Activated CD4-positive, alpha-beta memory T cell treated with anti-CD3 and anti-CD28 coated beads for 36 hours (primary cell): ENCODE measurements at regions of chr9 and their contacts with region 1.

Region 1: GRCh38 chr9:129737479-129738274 is 15.2 kb downstream of the PTGES start:
- DNase-seq: peak; percentile 91
- H3K4me3 Mint-ChIP-seq: peak overlapping the region; percentile 63
- H3K27ac Mint-ChIP-seq: no peak overlapping the region
- H3K4me1 Mint-ChIP-seq: peaks cover 8% of the 10 kb centered on the region
- H3K27me3 Mint-ChIP-seq: peaks cover 2% of the 10 kb centered on the region

Region 2: DNA sequence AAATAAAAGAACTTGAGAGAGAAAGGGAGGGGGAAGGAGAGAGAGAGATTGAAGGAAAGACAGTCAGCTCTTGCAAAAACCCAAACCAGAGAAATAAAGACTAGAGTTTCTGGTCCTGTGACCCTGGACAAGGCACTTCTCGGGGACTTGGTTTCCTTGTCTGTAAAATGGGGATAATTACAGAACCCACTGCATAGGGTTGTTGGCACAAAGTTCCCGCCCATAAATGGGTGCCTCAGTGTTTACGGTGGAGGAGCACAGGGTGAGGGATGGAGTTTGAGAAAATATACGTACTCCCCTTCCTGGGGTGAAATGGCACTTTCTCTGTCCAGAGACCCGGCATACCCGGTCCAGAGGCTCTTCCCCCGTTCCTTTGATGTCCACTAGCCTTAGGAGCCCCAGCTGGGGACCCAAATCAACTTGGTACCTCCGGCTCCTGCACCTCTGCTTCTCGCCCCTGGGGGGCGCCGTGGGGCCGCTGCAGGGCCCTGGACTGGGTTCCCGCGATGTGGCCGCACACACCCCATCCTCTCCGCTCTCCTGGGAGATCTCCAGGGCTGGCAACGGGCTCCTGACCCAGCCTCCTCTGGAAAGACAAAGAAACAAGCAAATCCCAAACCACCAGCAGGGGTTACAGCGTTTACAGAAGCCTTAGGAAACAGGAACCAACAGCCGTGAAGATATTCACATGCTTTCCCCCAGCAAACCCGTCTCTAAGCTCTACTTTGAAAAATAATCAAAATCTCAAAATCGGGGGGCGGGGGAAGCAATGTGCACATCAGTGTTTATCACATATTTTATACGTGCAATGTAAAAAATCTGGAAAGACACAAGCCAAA is 11.1 kb before region 1 on chr9:
- CTCF ChIA-PET with region 1: interaction called, 50 read pairs
- POLR2A ChIA-PET with region 1: no interaction called
- intact Hi-C with region 1: no loop called
- DNase-seq: peak; percentile 75
- H3K4me3 Mint-ChIP-seq: no peak overlapping the region
- H3K27ac Mint-ChIP-seq: no peak overlapping the region
- H3K4me1 Mint-ChIP-seq: peaks cover 2% of the 10 kb centered on the region
- H3K27me3 Mint-ChIP-seq: peaks cover 9% of the 10 kb centered on the region

Region 3: DNA sequence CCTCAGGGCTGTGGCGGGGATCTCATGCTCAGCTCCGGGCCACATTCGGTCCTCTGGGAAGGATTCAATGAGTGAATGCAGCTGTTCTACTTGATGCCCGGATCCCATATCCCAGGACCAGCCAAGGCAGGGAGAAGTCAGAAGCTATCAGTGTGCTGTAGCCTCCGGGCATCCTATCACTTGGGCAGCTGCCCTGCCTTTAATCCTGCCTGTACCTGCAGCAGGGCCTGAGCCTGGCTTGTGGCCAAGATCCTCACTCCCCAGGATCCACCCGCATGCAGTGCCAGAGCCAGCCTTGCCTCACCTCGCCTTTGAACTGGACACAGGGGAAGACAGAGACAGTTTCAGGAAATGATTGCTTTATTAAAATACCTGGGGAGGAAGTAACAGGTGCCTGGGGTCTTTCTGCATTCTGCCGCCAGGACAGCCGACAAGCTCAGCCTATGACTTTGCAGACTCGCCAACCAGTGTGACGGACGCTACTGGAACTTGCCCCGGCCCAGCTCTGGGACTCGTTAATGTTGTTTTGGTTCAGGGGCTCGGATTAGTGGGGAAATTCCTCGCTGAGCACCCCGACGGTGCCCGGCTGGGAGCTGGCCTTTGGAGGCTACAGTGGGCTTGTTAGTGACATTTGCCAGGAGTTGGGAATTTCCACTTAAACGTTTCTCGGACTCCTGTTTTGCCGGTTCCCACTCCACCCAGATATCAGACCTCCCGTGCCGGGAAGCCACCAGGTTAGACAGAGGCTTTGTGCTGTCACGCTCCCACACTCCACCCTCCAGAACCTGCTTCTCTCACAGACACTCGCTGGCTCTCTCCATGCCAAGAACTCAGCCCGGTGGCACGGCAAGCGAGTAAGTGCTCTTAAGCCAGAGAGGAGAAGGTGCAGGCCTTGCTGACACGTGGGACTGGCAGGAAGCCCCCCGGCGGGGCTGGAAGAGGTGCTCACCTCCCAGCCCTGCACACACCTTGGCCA is 14.4 kb after region 1 on chr9:
- CTCF ChIA-PET with region 1: interaction called, 18 read pairs
- POLR2A ChIA-PET with region 1: no interaction called
- intact Hi-C with region 1: no loop called
- DNase-seq: no peak
- H3K4me3 Mint-ChIP-seq: no peak overlapping the region
- H3K27ac Mint-ChIP-seq: no peak overlapping the region
- H3K4me1 Mint-ChIP-seq: peaks cover 12% of the 10 kb centered on the region
- H3K27me3 Mint-ChIP-seq: peaks cover 4% of the 10 kb centered on the region

Region 4: GRCh38 chr9:129776938-129777768 is 39.5 kb after region 1 on chr9:
- CTCF ChIA-PET with region 1: interaction called, 82 read pairs
- POLR2A ChIA-PET with region 1: no interaction called
- intact Hi-C with region 1: no loop called
- DNase-seq: peak; percentile 82
- H3K4me3 Mint-ChIP-seq: no peak overlapping the region
- H3K27ac Mint-ChIP-seq: no peak overlapping the region
- H3K4me1 Mint-ChIP-seq: peaks cover 15% of the 10 kb centered on the region
- H3K27me3 Mint-ChIP-seq: peaks cover 7% of the 10 kb centered on the region

Region 5: GRCh38 chr9:129783516-129784361 is 46.1 kb after region 1 on chr9:
- CTCF ChIA-PET with region 1: interaction called, 82 read pairs
- POLR2A ChIA-PET with region 1: no interaction called
- intact Hi-C with region 1: loop called (anchors 1 kb)
- DNase-seq: peak; percentile 80
- H3K4me3 Mint-ChIP-seq: no peak overlapping the region
- H3K27ac Mint-ChIP-seq: no peak overlapping the region
- H3K4me1 Mint-ChIP-seq: no peaks in the 10 kb centered on the region
- H3K27me3 Mint-ChIP-seq: no peaks in the 10 kb centered on the region

Region 6: GRCh38 chr9:129802851-129803675 is 65.4 kb after region 1 on chr9 and contains the start of gene TOR1B:
- CTCF ChIA-PET with region 1: interaction called, 10 read pairs
- POLR2A ChIA-PET with region 1: no interaction called
- intact Hi-C with region 1: no loop called
- DNase-seq: peak; percentile 96
- H3K4me3 Mint-ChIP-seq: peak within 1 kb of the TSS; percentile 84
- H3K27ac Mint-ChIP-seq: peak within 1 kb of the TSS; percentile 85
- H3K4me1 Mint-ChIP-seq: peaks cover 17% of the 10 kb centered on the region
- H3K27me3 Mint-ChIP-seq: no peaks in the 10 kb centered on the region
- total RNA-seq, gene TOR1B: 20.6 to 23.0 TPM

Region 7: GRCh38 chr9:129938291-129938979 is 200.8 kb after region 1 on chr9:
- CTCF ChIA-PET with region 1: no interaction called
- POLR2A ChIA-PET with region 1: no interaction called
- intact Hi-C with region 1: no loop called
- DNase-seq: no peak
- H3K4me3 Mint-ChIP-seq: no peak overlapping the region
- H3K27ac Mint-ChIP-seq: peak overlapping the region; percentile 84
- H3K4me1 Mint-ChIP-seq: peaks cover 60% of the 10 kb centered on the region
- H3K27me3 Mint-ChIP-seq: no peaks in the 10 kb centered on the region